H1 (cell line): ENCODE measurements at regions of chr1 and their contacts with region 1.

Region 1: DNA sequence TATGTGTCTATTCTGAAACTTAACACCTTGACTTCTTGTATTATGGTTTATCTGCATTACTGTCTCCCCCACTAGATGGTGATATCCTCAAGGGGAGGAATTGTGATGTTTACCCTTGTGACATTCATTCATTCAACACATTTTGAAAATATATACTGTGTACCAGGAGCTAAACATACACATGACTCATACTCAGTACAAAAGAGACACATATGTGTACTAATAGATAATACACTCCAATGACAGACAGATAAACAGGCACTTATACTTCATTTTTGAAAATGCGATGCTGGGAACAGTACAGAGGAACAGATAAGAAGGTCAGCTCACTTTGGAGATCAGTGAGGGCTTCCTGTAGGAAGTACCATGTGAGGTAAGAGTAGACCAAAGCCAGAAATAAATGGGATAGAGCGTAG is 8.9 kb upstream of the RAB3GAP2 start:
- DNase-seq: no peak
- H3K4me3 ChIP-seq: no peak overlapping the region
- H3K27ac ChIP-seq: no peak overlapping the region
- H3K4me1 ChIP-seq: no peaks in the 10 kb centered on the region
- H3K27me3 ChIP-seq: no peaks in the 10 kb centered on the region
- CTCF ChIP-seq: peak in 2 of 3 experiments; percentile 47 to 65; a peak in 2 of 4 replicates
- EP300 ChIP-seq: no peak
- POLR2A ChIP-seq: no peak
- RAD21 ChIP-seq: peak; percentile 83 to 85

Region 2: GRCh38 chr1:220217383-220217988 is 63.7 kb before region 1 on chr1:
- CTCF ChIA-PET with region 1: interaction called, 31 read pairs
- POLR2A ChIA-PET with region 1: no interaction called
- DNase-seq: no peak
- H3K4me3 ChIP-seq: no peak overlapping the region
- H3K27ac ChIP-seq: no peak overlapping the region
- H3K4me1 ChIP-seq: no peaks in the 10 kb centered on the region; a peak in 1 of 7 replicates
- H3K27me3 ChIP-seq: no peaks in the 10 kb centered on the region
- CTCF ChIP-seq: peak in 2 of 3 experiments; percentile 44; a peak in 2 of 4 replicates
- EP300 ChIP-seq: no peak
- POLR2A ChIP-seq: no peak
- RAD21 ChIP-seq: peak in 1 of 2 experiments; percentile 21; a peak in 2 of 4 replicates

Region 3: GRCh38 chr1:220300442-220301121 is 19.4 kb after region 1 on chr1:
- CTCF ChIA-PET with region 1: interaction called, 168 read pairs
- POLR2A ChIA-PET with region 1: no interaction called
- DNase-seq: no peak
- H3K4me3 ChIP-seq: no peak overlapping the region
- H3K27ac ChIP-seq: no peak overlapping the region
- H3K4me1 ChIP-seq: peaks cover 0 to 14% (median 4%) of the 10 kb centered on the region in 4 experiments; a peak in 5 of 7 replicates
- H3K27me3 ChIP-seq: no peaks in the 10 kb centered on the region
- CTCF ChIP-seq: no peak
- EP300 ChIP-seq: no peak
- POLR2A ChIP-seq: no peak
- RAD21 ChIP-seq: no peak

Region 4: DNA sequence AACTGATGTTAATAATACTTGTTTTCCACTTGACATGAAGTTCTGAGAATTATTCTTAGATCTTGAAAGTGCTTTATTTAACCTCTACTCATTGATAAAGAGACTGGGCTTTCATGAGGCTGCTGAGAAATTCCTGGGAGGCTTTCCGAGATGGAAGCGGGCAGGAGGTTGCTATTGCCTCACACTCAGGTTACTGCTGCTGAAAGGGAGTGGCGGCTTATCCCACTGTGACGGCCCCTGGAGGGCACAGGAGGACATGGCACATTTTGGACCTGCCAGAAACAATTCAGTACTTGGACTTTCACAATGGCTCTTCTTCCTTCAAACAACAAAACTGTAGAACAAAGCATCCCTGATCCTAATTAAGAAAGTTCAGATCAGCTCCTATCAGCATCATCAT is 230.6 kb after region 1 on chr1:
- CTCF ChIA-PET with region 1: interaction called, 13 read pairs
- POLR2A ChIA-PET with region 1: no interaction called
- DNase-seq: no peak
- H3K4me3 ChIP-seq: no peak overlapping the region
- H3K27ac ChIP-seq: no peak overlapping the region
- H3K4me1 ChIP-seq: peaks cover 0 to 3% (median 1%) of the 10 kb centered on the region in 4 experiments; a peak in 3 of 7 replicates
- H3K27me3 ChIP-seq: no peaks in the 10 kb centered on the region
- CTCF ChIP-seq: peak; percentile 36 to 67 (median 63); a peak in 3 of 4 replicates
- EP300 ChIP-seq: no peak
- POLR2A ChIP-seq: no peak
- RAD21 ChIP-seq: peak; percentile 43 to 64

Region 5: GRCh38 chr1:220748089-220748934 is 467.1 kb after region 1 on chr1 and contains the start of gene MTARC2:
- CTCF ChIA-PET with region 1: interaction called, 10 read pairs
- POLR2A ChIA-PET with region 1: interaction called, 5 read pairs
- DNase-seq: peak; percentile 57 to 81
- H3K4me3 ChIP-seq: peak within 1 kb of the TSS; percentile 71 to 76 (median 74)
- H3K27ac ChIP-seq: peak within 1 kb of the TSS; percentile 44; the same call in 1 of the 2 replicates
- H3K4me1 ChIP-seq: peaks cover 3 to 9% (median 7%) of the 10 kb centered on the region in 4 experiments; a peak in 5 of 7 replicates
- H3K27me3 ChIP-seq: peaks cover 0 to 28% (median 15%) of the 10 kb centered on the region in 4 experiments; a peak in 6 of 7 replicates
- CTCF ChIP-seq: no peak
- EP300 ChIP-seq: no peak
- POLR2A ChIP-seq: peak; percentile 79 to 92
- RAD21 ChIP-seq: no peak
- total RNA-seq, gene MTARC2: 6.9 and 7.2 TPM in 2 replicates

Region 6: GRCh38 chr1:220810179-220810653 is 529.0 kb after region 1 on chr1:
- CTCF ChIA-PET with region 1: interaction called, 11 read pairs
- POLR2A ChIA-PET with region 1: no interaction called
- DNase-seq: peak in 1 of 2 experiments; percentile 84
- H3K4me3 ChIP-seq: peak overlapping the region in 2 of 4 experiments; percentile 23 to 49; a peak in 5 of 8 replicates
- H3K27ac ChIP-seq: no peak overlapping the region
- H3K4me1 ChIP-seq: peaks cover 0 to 6% (median under 1%) of the 10 kb centered on the region in 4 experiments; a peak in 2 of 7 replicates
- H3K27me3 ChIP-seq: no peaks in the 10 kb centered on the region
- CTCF ChIP-seq: peak; percentile 82 to 89 (median 86)
- EP300 ChIP-seq: no peak
- POLR2A ChIP-seq: no peak
- RAD21 ChIP-seq: peak; percentile 75 to 80